ENCODE measurements at regions of chr5 and their contacts with region 1.

Region 1: DNA sequence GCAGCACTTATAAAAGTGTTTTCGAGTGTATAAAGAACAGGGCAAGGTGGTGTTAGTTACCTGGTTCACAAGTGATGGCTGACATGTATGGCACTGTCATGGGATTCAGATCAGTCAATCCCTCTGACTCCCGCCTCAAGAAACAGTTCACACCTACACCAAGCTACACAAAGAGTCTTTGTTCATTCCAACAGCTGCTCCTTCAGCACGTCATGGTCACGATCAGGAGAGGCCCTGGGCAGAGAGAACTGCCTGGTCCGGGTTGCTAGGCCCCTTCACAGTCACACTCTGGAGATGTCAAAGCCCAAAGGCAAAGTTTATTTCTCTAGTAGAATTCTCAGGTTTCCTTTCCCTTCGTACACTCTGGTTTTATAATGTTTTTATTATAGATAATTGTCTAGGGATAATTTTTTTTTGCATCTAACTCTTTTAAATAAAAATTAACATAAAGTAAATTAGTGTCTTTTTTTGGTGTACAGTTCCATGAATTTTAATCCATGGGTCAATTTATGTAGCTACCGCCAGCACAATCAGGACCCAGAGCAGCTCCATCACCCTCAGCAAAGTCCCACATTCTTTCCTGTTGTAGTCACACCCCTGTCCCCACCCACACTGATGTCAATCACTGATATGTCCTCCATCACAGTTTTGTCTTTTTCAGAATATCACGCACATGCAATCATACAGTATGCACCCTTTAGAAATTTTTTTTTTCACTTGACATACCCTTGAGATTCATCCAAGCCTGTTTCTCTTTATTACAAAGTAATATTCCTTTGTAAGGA is 426.8 kb downstream of the ZSWIM6 start:
- DNase-seq: no peak
- H3K4me3 ChIP-seq: no peak overlapping the region
- H3K27ac ChIP-seq: no peak overlapping the region
- H3K4me1 ChIP-seq: no peaks in the 10 kb centered on the region
- H3K27me3 ChIP-seq: no peaks in the 10 kb centered on the region
- CTCF ChIP-seq: no peak
- POLR2A ChIP-seq: no peak

Region 2: DNA sequence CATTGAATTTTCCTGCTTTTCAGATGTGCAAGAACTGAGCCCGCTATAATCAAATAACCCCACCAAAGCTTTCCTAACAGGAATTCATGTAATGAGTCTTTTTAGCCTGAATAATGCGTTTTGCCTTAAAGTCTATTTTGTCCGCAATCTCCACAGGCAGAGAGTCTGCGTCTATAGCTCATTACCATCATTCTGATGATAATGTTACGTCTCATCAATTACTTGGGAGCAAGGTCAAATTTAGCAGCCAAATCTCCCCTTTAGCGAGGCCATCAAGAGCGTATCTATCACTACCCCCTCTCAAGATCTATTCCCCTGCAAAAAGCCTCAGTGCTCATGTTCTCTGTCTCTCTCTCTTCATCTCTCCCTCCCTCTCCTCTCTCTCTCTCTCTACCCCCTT is 10.8 kb before region 1 on chr5:
- intact Hi-C with region 1: loop called (anchors 1 kb)
- DNase-seq: no peak
- H3K4me3 ChIP-seq: no peak overlapping the region
- H3K27ac ChIP-seq: no peak overlapping the region
- H3K4me1 ChIP-seq: no peaks in the 10 kb centered on the region
- H3K27me3 ChIP-seq: no peaks in the 10 kb centered on the region
- CTCF ChIP-seq: no peak
- POLR2A ChIP-seq: no peak

Region 3: GRCh38 chr5:61817472-61818326 is 58.8 kb after region 1 on chr5:
- intact Hi-C with region 1: no loop called
- DNase-seq: peak in 1 of 2 donors; percentile 24
- H3K4me3 ChIP-seq: no peak overlapping the region
- H3K27ac ChIP-seq: no peak overlapping the region
- H3K4me1 ChIP-seq: no peaks in the 10 kb centered on the region
- H3K27me3 ChIP-seq: no peaks in the 10 kb centered on the region
- CTCF ChIP-seq: peak in 2 of 3 donors; percentile 32 to 34
- POLR2A ChIP-seq: no peak